ENCODE measurements at regions of chr22 and their contacts with region 1.

Region 1: DNA sequence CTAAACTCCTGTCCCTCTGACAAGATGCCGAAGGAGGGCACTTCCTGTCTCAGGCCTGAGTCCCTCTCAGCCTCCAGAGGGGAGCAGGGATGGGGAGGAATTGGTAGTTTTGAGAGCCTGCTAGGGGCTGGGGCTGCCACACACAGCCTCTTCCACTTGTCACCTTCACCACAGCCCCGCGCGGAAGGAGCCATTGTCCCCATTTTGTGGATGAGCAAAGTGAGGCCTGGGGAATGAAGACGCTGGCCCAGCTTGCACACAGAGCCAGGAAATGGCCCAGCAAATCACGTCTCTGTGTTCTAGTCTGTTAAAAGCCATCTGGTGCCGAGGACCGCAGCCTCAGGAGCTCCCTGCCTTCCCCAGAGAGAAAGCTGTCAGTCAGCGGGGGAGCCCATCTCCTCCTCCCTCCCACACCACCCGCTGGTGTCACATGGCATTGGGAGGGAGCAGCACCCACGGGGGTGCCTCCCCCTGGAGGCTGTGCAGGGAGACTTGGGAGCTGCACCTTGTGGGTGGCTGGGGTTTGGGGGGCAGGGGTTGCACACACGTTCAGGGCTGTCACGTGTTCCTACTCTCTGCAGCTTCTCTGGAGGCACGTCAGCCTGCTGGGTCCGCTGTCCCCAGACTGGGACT is 34.6 kb downstream of the RASD2 start:
- DNase-seq: no peak
- ATAC-seq: no peak
- H3K4me3 ChIP-seq: no peak overlapping the region
- H3K27ac ChIP-seq: no peak overlapping the region
- H3K4me1 ChIP-seq: no peaks in the 10 kb centered on the region
- H3K27me3 ChIP-seq: no peaks in the 10 kb centered on the region
- CTCF ChIP-seq: no peak

Region 2: DNA sequence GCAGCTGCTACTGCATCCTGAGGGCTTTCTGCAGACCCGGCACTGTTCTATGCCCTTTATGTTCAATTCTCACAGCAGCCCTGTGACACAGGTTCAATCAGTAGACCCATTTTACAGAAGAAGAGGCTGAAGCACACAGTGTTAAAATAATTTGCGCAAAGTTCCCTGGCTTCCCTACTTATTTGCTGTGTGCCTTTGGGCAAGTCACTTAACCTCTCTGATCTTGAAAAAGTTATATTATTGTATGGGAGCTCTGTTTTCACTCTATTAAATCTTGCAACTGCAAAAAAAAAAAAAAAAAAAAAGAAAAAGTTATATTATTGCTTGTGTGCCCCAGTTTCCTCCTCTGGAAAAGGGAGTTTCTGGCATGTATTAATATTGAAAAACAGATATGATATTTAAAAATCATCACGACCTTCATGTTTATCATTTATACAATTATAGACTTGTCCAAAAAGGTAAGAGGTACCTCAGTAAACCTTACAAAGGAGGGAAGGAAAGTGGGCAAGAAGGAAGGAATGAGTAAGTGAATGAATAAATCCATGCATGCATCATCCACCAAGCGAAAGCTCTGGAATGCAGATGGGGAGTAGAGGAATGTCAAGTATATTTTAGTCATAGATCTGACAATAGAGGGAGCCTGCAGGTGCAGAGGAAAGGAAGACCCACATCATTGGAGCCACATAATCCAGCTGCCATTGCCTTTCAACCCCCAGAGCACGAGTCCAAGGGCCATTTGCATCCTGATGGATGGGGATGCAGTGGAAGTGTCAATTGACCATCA is 530.4 kb before region 1 on chr22:
- intact Hi-C with region 1: loop called in 1 of 2 experiments (anchors 5 kb)
- DNase-seq: no peak
- ATAC-seq: no peak
- H3K4me3 ChIP-seq: no peak overlapping the region
- H3K27ac ChIP-seq: no peak overlapping the region
- H3K4me1 ChIP-seq: no peaks in the 10 kb centered on the region
- H3K27me3 ChIP-seq: peaks cover 0 to 10% (median 2%) of the 10 kb centered on the region in 3 donors
- CTCF ChIP-seq: no peak

Region 3: DNA sequence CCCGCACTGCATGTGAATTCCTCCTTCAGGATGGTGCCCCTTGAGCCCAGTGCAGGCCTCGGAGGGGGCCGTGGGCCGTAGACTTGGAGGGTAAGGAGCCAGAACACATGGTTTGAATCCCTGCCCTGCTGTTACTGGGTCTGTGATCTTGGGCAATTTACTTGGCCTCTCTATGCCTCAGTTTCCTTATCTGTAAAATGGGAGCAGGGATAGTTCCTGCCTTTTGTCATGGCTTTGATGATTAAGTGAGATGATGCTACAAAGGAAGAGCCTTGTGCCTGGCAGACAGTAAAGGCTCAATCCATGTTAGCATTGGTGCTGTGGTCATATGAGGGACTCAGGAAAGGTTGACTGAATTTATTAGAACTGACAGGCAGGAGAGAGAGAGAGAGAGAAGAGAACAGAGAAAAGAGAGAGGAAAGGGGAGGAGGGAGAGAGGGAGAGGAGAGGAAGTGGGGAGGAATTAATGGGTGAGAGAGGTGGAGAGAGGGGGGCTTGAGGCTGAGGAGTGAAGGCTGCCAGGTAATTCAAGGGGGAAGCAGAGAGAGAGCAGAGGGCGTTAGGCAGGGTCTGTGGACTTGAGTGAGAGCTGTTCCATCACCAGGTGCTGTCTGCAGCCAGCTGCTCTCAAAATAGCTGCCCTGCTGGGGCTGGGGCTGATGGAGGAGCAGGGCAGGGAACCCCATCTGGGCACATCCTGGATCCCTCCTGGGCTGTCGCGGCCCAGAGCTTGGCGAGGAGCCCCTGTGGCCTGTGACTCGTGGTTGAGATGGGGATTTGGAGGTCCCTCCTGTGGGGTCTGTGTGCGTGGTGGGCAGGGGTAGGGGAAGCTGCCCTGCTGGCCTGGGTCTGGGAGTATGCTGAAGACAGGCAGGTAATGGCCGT is 131.2 kb before region 1 on chr22:
- intact Hi-C with region 1: loop called in 1 of 2 experiments (anchors 5 kb)
- DNase-seq: no peak
- ATAC-seq: no peak
- H3K4me3 ChIP-seq: no peak overlapping the region
- H3K27ac ChIP-seq: no peak overlapping the region
- H3K4me1 ChIP-seq: no peaks in the 10 kb centered on the region
- H3K27me3 ChIP-seq: no peaks in the 10 kb centered on the region
- CTCF ChIP-seq: no peak

Region 4: GRCh38 chr22:35524966-35525686 is 50.1 kb before region 1 on chr22:
- intact Hi-C with region 1: no loop called
- DNase-seq: peak in 1 of 2 donors; percentile 73
- ATAC-seq: peak in 2 of 4 donors; percentile 40 to 65
- H3K4me3 ChIP-seq: peak overlapping the region; percentile 10
- H3K27ac ChIP-seq: no peak overlapping the region
- H3K4me1 ChIP-seq: no peaks in the 10 kb centered on the region
- H3K27me3 ChIP-seq: no peaks in the 10 kb centered on the region
- CTCF ChIP-seq: no peak